Posterior cingulate gyrus (tissue), 11 donors: ENCODE measurements at regions of chr5 and their contacts with region 1.

Region 1: DNA sequence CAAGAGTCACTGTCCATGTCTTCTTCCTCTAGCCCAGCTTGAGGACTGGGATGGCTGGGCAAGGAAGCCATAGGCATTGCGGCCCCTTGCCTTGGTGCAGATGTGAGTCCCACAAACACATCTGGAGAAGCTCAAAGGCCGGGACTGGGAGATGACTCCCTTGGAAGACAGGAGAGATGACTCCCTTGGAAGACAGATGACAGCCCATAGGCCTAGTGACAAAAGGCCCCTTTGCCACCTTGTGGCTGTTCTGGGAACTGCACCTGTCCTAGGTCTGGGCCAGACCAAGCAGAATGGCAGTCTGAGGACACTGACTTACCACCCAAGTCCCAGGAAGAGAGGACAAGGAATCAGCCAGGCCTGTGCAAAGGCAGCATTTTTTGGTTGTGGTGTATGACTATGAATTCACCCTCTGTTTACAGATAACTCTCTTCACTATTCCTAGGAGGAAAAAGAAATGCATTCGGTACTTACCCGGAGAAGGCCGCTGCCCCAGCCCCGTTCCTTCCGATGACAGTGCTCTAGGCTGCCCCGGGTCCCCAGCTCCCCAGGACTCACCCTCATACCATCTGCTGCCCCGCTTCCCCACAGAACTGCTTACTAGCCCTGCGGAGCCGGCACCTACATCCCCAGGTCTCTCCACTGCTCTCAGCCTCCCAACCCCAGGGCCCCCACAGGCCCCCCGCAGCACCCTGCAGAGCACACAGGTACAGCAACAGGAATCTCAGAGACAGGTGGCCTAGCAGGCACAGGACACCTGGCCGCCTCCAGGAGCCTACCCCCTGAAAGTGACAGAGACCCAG is 30.8 kb downstream of the SKP1 start:
- DNase-seq: peak; percentile 76 to 97 (median 86)

Region 2: DNA sequence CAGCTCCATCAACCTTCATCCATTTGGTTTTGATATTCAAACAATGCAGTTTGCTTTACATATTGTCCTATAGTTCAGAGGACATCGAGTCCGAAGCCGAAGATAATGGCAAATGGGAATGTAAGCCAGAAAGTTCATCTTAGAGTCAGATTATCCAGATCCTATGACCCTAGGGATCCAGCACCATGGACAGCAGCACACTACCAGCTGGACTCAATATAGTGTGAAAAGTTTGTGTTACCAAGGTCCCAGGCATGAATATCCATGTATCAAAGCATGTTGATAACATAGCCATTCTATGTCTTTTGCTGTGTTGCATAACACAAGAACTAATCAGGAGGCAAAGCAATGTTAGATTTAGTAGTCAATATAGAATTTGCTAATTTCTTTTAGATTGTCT is 580.0 kb before region 1 on chr5:
- intact Hi-C with region 1: no loop called
- DNase-seq: no peak

Region 3: DNA sequence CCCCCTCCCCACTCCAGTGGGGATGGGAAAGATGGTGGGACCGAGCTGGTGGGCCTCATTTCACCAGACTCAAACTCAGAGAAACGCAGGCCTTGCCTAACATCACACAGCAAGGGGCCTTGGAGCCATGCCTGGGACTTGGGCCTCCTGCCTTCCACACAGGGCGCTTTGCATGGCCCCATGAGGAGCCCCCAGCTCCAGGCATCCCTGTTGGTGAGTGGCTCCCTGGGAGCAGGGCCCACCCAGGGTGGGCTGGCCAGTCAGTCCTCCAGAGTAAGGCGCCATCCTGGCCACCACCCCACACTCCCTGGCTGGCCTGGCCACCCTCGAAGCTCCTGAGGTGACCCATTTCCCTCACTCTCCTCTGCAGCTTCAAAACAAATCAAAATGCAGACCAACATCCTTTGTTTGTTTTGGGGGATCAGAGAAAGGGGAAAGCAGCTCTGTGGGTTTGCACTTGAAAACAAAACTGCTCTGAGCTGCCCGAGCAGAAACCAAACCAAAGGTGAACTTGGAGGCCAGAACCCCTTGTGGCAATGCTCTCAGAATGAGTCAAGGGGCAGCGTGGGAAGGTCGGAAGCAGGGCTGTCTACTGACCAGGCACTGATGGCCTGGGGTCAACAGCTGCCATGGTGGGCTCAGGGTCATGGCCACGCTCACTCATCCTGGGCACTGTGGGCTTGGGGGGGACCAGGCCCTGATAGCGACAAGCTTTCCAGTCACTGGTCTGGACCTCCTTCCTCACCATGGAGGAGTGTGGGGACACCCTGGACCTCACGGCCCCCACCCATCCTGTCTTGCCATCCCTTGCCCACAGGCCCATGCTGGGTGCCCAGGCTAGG is 104.2 kb before region 1 on chr5:
- intact Hi-C with region 1: loop called (anchors 1 kb)
- DNase-seq: peak in 2 of 10 donors; percentile 48 to 74

Region 4: DNA sequence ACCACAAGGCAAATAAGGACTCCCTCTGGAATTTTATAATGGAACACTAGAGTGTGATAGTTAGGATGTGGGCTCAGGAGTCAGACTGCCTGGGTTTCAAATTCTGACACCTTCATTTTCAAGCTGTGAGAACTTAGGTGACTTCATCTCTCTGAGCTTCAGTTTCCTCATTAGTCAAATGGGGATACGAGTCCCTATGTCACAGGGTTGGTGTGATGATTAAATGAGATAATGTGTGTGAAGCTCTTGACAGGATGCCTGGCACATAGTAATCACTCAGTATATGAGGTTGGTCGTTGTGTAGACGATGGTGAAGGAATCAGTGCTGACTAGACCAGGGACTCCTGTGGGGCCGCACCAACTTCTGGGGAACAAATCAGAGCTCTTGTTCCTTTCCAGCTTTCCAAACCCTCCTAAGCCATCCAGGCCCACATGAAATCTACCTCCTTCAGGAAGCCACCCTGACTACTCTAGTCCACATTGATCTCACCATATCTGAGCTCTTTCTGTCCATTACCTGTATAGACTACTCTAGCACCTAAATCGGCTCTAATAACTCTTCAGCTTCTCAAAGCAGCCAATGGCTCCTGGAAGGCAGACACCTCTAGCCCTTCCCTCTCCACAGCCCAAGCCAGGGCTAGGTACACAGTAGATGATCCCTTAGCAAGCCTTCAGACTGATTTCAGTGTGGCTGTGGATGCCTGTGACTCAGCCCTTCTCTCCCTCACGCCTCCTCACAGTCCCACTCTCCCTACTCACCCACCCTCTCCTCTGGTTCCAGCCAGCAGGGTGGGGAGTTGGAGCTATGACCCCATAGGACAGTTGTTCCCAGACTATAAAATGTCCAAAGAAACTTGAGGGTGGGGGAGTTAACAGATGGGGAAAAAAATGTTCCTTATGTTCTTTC is 34.0 kb before region 1 on chr5:
- intact Hi-C with region 1: no loop called
- DNase-seq: no peak

Region 5: DNA sequence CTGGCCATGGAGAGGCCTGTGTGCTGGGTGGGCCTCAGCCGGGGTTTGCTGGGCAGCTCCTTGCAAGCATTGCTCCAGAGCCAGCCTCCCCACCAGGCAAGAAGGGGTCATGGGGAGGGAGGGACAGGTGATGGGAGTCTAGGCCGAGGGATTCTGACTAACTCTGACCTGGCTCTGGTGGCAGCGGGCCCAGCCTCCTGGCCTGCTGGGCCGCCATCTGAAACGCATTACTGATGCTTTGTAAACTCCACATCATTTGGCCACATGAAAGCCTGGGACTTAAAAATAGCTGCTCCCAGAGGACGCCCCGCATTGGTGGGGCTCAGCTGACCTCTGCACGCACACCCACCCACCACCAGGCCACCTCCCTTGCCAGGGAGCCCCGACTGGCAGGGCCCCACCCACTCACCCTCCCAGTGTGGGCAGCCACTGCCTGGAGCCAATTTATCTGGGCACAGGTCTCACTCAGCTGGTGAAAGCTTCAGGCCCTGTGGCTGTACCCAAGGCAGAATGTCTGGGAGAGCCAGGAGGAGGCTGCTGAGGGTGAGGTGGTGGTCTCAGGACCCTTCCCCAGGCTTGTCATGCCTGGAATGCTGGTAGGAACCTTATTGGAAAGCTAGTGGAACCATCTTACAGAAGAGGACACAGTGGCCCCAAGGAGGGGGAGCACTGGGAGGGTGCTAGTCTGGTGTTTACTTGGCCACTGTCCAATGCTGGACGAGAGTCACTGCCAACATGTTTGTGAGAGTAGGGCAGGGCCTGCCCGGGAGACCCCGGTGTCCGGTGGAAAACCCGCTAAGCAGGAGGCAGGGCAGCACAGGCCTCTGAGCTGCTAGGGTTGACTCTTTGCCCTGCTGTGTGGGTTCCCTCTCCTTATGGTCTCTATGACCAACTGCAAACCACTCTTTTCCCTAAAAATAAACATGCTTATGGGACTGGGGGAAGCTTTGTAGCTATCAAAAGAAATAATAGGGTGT is 20.7 kb before region 1 on chr5:
- intact Hi-C with region 1: no loop called
- DNase-seq: peak in 2 of 10 donors; percentile 27 to 28

Region 6: GRCh38 chr5:134328619-134329018 is 182.6 kb after region 1 on chr5:
- intact Hi-C with region 1: no loop called
- DNase-seq: no peak